GM18951 (cell line): ENCODE measurements at regions of chr2 and their contacts with region 1.

Region 1: GRCh38 chr2:153163058-153163457 is 315.5 kb downstream of the RPRM start:
- POLR2A ChIP-seq: no peak

Region 2: GRCh38 chr2:152861349-152861942 is 301.6 kb before region 1 on chr2:
- in situ Hi-C with region 1: no loop called
- POLR2A ChIP-seq: no peak

Region 3: GRCh38 chr2:153478334-153479261 is 315.5 kb after region 1 on chr2 and contains the start of gene RPRM:
- in situ Hi-C with region 1: loop called (anchors 25 kb)
- POLR2A ChIP-seq: no peak